Ascending aorta (tissue), 2 donors: ENCODE measurements at regions of chr3 and their contacts with region 1.

Region 1: GRCh38 chr3:49839193-49839809 is 17.1 kb downstream of the TRAIP start:
- DNase-seq: peak; percentile 25 to 89
- H3K4me3 ChIP-seq: no peak overlapping the region
- H3K27ac ChIP-seq: no peak overlapping the region
- H3K4me1 ChIP-seq: peaks cover 0 to 4% of the 10 kb centered on the region in 2 donors
- H3K27me3 ChIP-seq: no peaks in the 10 kb centered on the region
- CTCF ChIP-seq: peak; percentile 84 to 93 (median 93)

Region 2: GRCh38 chr3:48756640-48757039 is 1082.7 kb before region 1 on chr3:
- intact Hi-C with region 1: no loop called
- DNase-seq: no peak
- H3K4me3 ChIP-seq: no peak overlapping the region
- H3K27ac ChIP-seq: no peak overlapping the region
- H3K4me1 ChIP-seq: no peaks in the 10 kb centered on the region
- H3K27me3 ChIP-seq: no peaks in the 10 kb centered on the region
- CTCF ChIP-seq: no peak

Region 3: GRCh38 chr3:49539659-49540560 is 299.4 kb before region 1 on chr3:
- intact Hi-C with region 1: loop called (anchors 2 kb)
- DNase-seq: peak; percentile 67 to 95
- H3K4me3 ChIP-seq: peak overlapping the region; percentile 37 to 66
- H3K27ac ChIP-seq: peak overlapping the region; percentile 67 to 87
- H3K4me1 ChIP-seq: no peaks in the 10 kb centered on the region
- H3K27me3 ChIP-seq: no peaks in the 10 kb centered on the region
- CTCF ChIP-seq: peak; percentile 88 to 94 (median 94)

Region 4: DNA sequence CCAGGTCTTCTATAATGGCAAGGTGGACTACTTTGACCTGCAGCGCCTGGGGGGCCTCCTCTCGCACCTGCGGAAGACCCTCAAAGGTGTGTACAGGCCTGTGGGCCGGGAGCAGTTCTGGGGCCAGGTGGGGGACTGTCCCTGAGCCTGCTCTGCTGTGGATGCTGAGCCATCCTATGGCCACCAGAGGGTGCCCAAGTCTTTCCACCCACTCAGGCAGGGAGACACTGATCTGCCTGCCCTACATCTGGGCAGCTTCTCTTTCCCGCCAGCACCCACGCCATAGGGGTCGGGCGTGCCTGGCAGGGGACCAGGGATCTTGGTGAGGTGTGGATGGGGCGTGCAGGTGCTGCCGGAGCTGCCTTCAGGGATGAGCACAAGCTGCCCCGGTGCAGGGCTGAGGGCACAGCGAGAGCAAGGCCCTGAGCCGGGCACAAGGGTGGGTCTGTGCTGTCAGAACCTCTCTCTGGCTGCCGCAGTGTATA is 135.8 kb before region 1 on chr3:
- intact Hi-C with region 1: loop called (anchors 2 kb)
- DNase-seq: no peak
- H3K4me3 ChIP-seq: no peak overlapping the region
- H3K27ac ChIP-seq: no peak overlapping the region
- H3K4me1 ChIP-seq: no peaks in the 10 kb centered on the region
- H3K27me3 ChIP-seq: no peaks in the 10 kb centered on the region
- CTCF ChIP-seq: peak; percentile 61 to 69 (median 64)

Region 5: GRCh38 chr3:49802719-49803464 is 36.4 kb before region 1 on chr3 and contains the start of gene INKA1:
- intact Hi-C with region 1: loop called (anchors 1 kb)
- DNase-seq: peak; percentile 49 to 93
- H3K4me3 ChIP-seq: peak within 1 kb of the TSS; percentile 84 to 86
- H3K27ac ChIP-seq: peak within 1 kb of the TSS; percentile 98
- H3K4me1 ChIP-seq: peaks cover 22 to 40% of the 10 kb centered on the region in 2 donors
- H3K27me3 ChIP-seq: no peaks in the 10 kb centered on the region
- CTCF ChIP-seq: peak; percentile 88 to 96 (median 89)
- total RNA-seq, gene INKA1: not detected

Region 6: DNA sequence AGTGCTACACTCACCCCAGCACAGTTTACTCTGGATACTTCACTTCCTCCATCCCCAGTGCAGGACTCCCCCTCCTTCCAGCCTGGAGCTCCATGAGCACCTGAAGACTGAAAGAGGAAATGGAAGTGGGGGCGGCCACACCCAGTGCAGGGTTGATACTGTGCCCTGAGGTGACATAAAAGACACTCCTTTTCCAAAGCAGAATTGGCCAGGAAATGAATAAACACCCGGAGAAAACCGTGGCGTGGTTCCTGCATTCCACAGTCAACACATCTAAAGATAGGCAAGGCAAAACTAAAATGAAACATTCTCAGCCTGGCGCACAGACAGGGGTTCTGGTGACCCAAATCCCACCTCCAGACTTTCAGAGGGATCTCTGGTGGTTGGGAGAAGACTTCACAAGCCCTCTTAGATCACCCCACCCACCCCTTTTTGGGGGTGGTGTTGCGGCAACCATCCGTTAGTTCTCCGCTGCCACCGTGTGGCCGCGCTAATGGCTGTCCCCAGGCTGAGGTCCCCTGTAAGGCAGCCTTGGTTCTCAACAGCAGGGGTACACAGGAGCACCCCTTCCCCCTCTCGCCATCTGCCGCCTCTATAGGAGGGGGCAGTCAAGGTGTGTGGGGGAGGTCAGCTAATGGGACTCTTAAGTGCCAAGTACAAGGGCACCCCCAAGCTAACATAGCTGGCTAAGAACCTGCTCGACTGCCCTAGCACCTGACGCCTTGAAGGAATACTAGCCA is 66.9 kb after region 1 on chr3:
- intact Hi-C with region 1: loop called (anchors 2 kb)
- DNase-seq: peak in 1 of 2 donors; percentile 76
- H3K4me3 ChIP-seq: peak overlapping the region; percentile 5 to 53
- H3K27ac ChIP-seq: peak overlapping the region; percentile 50
- H3K4me1 ChIP-seq: peaks cover 0 to 14% of the 10 kb centered on the region in 2 donors
- H3K27me3 ChIP-seq: no peaks in the 10 kb centered on the region
- CTCF ChIP-seq: peak; percentile 60 to 74 (median 63)